CD14-positive monocyte (primary cell): ENCODE measurements at regions of chr17 and their contacts with region 1.

Region 1: GRCh38 chr17:82230627-82231311 is 1.9 kb downstream of the SLC16A3 start:
- DNase-seq: peak; percentile 72 to 82 (median 74)
- H3K4me3 ChIP-seq: peak overlapping the region; percentile 90 to 100 (median 100)
- H3K4me3 Mint-ChIP-seq: peak overlapping the region; percentile 97 to 99
- H3K27ac ChIP-seq: peak overlapping the region; percentile 82 to 95
- H3K27ac Mint-ChIP-seq: peak overlapping the region; percentile 43 to 94 (median 89)
- H3K4me1 ChIP-seq: peaks cover 67 to 84% of the 10 kb centered on the region in 2 donors
- H3K4me1 Mint-ChIP-seq: peaks cover 43% of the 10 kb centered on the region
- H3K27me3 ChIP-seq: no peaks in the 10 kb centered on the region
- H3K27me3 Mint-ChIP-seq: no peaks in the 10 kb centered on the region
- CTCF ChIP-seq: peak; percentile 85

Region 2: DNA sequence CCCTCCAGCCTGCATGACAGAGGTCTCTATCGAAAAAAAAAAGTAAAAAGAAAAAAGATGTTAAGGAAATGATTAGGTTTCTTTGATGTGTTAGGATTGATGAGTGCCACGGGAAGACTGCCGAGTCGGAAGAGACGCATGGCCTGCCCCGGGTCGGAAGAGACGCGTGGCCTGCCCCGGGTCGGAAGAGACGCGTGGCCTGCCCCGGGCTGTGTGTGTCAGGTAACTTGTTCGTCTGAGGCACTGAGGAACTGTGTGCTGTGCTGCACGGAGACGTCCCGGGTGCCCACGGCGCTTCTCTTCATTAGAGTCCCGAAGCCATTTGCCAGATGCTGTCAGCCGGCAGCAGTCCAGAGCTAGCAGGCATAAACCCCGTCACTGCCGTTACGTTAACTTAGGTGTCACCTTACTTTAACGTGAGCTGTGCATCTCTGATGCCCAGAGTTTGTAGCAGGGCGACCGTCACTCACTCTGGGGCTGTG is 92.2 kb before region 1 on chr17:
- intact Hi-C with region 1: no loop called
- DNase-seq: no peak
- H3K4me3 ChIP-seq: no peak overlapping the region
- H3K4me3 Mint-ChIP-seq: no peak overlapping the region
- H3K27ac ChIP-seq: no peak overlapping the region
- H3K27ac Mint-ChIP-seq: no peak overlapping the region
- H3K4me1 ChIP-seq: no peaks in the 10 kb centered on the region
- H3K4me1 Mint-ChIP-seq: no peaks in the 10 kb centered on the region
- H3K27me3 ChIP-seq: no peaks in the 10 kb centered on the region
- H3K27me3 Mint-ChIP-seq: peaks cover 0 to 2% (median 0%) of the 10 kb centered on the region in 3 donors
- CTCF ChIP-seq: no peak

Region 3: DNA sequence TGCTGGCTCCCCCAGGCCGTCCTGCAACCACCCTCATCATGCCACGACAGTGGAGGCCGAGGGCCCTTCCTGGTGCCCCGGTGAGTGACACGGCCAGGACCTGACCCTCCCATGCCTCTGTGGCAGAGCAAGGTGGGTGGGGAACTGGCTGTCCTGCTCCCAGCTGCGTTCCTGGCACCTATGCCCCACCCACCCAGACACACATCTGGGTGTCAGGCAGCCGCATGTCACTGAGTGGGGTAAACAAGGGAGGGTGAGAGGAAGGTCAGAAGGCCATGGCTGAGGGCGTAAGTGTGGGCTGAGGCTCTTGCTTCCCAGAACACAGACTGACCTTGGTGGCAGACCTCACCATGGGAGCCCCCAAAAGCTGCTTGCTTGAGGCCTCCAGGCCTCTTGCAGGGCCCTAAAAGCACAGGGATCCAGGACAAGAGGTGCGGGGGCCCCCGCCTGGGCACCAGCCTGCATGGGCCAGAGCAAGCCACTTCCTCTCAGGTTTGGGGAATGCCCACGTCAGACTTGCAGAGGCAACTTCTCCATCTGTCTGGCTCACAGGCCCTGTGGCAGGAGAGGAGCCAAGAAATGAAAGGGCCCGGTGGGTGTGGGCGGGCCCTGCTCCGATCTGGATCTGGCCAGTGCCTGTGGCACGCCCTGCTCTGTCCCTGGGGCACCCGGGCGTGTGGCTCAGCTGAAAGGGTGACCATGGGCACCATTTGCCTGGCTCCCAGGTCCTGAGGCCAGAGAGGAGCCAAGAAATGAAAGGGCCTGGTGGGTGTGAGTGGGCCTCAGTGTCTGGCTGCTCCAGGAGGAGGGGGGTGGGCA is 14.3 kb before region 1 on chr17:
- intact Hi-C with region 1: loop called (anchors 2 kb)
- DNase-seq: peak; percentile 97 to 99 (median 97)
- H3K4me3 ChIP-seq: peak overlapping the region in 2 of 3 experiments; percentile 37 to 64
- H3K4me3 Mint-ChIP-seq: peak overlapping the region; percentile 70 to 77
- H3K27ac ChIP-seq: peak overlapping the region; percentile 98 to 100
- H3K27ac Mint-ChIP-seq: peak overlapping the region; percentile 98 to 99 (median 98)
- H3K4me1 ChIP-seq: peaks cover 87 to 97% of the 10 kb centered on the region in 2 donors
- H3K4me1 Mint-ChIP-seq: peaks cover 72% of the 10 kb centered on the region
- H3K27me3 ChIP-seq: no peaks in the 10 kb centered on the region
- H3K27me3 Mint-ChIP-seq: peaks cover 0 to under 1% (median under 1%) of the 10 kb centered on the region in 3 donors
- CTCF ChIP-seq: no peak

Region 4: DNA sequence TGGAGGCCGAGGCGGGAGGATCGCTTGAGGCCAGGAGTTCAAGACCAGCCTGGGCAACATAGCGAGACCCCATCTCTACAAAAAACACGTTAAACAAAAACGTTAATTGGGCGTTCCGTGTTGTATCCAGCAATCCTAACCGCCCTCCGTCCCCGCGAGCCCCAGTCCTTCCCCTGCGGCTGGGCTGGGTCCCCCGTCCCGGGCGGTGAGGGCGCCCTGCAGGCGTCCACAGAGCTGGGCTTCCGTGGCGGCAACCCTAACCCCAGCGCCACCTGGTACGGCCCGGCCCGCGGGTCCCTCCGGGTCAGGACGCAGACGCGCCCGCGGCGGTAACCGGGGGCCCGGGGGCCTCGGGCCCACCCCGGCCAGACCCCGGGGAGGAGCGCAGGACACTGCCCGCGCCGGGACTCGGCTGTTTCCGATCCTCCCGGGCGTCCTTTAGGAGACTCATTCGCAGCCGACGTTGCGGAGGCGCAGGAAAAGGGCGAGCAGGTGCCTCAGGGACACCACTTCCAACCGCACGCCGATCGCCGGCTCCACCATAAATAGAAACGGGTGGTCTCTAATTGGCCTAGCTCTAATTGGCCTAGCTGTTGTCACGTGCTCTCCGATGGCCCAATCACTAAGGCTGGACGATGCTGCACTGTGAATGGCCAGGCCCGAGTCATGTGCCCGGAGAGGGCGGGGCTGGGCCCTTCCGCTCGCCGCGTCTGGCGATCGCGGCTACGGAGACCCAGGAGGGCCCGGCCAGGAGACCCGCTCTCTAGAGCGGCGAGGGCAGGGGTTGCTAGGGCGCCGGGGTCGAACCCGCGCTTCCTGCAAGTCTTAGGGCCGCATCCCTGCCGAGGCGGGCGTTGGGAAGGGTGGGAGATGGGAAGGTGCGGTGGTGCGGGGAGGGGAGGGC is 61.7 kb after region 1 on chr17:
- intact Hi-C with region 1: loop called in 1 of 2 experiments (anchors 10 kb)
- DNase-seq: peak; percentile 93 to 98 (median 95)
- H3K4me3 ChIP-seq: peak overlapping the region; percentile 51 to 91 (median 62)
- H3K4me3 Mint-ChIP-seq: peak overlapping the region; percentile 78 to 89
- H3K27ac ChIP-seq: peak overlapping the region; percentile 85 to 90
- H3K27ac Mint-ChIP-seq: peak overlapping the region; percentile 79 to 92 (median 89)
- H3K4me1 ChIP-seq: peaks cover 38 to 46% of the 10 kb centered on the region in 2 donors
- H3K4me1 Mint-ChIP-seq: peaks cover 54% of the 10 kb centered on the region
- H3K27me3 ChIP-seq: no peaks in the 10 kb centered on the region
- H3K27me3 Mint-ChIP-seq: peaks cover 0 to 6% (median 5%) of the 10 kb centered on the region in 3 donors
- CTCF ChIP-seq: no peak